ENCODE measurements at regions of chr11 and their contacts with region 1.

Region 1: GRCh38 chr11:75814686-75815344 is at the start of gene UVRAG:
- DNase-seq: peak; percentile 98 to 99
- ATAC-seq: peak; percentile 83 to 96 (median 86)
- H3K4me3 ChIP-seq: peak within 1 kb of the TSS; percentile 81
- H3K4me3 Mint-ChIP-seq: peak within 1 kb of the TSS; percentile 96
- H3K27ac ChIP-seq: peak within 1 kb of the TSS; percentile 86
- H3K27ac Mint-ChIP-seq: no peak within 1 kb of the TSS
- H3K4me1 ChIP-seq: peaks cover 19% of the 10 kb centered on the region
- H3K4me1 Mint-ChIP-seq: peaks cover 7 to 21% of the 10 kb centered on the region in 2 donors
- H3K27me3 ChIP-seq: no peaks in the 10 kb centered on the region
- H3K27me3 Mint-ChIP-seq: no peaks in the 10 kb centered on the region
- CTCF ChIP-seq: no peak
- total RNA-seq, gene UVRAG: 39.9 to 52.5 (median 41.4) TPM

Region 2: DNA sequence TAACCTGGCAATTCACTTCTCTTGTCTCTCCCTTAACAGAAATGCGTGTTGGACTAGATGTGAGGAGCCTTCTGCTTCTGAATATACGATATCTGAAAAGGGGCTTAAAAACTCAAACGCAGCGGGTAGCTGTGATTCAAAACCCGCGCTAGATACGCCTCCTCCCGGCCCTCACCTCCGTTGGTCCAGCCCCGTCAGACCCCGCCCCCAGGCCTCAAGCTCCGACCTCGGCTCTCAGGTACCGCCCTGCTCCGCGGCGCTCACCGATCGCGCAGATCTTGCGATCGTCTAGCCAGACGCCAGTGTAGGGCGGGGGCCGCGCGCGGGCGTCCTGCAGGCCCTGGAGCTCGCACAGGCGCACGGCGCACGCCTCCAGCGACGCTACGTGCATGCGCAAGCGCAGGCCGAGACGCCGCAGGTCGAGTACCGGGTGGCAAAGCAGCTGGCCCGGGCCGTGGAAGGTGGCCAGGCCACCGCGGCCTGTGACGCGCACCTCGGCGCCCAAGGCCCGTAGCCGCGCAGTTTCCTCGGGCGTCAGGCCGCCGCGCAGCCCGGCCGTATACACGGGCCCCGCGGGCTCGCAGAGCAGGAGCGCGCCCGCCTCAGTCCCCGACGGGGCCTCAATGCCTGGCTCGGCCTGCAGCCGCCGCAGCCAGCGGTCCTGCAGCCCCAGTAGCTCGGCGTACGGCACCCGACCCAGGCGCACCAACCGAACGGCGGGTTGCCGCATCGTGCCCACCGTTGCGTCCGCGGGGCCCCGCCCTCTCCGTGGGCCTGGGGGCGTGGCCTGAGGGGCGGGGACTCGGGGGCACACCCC is 1321.6 kb before region 1 on chr11 and contains the start of gene LIPT2:
- intact Hi-C with region 1: loop called (anchors 5 kb)
- DNase-seq: peak; percentile 94 to 99
- ATAC-seq: peak; percentile 95 to 99 (median 95)
- H3K4me3 ChIP-seq: peak within 1 kb of the TSS; percentile 44
- H3K4me3 Mint-ChIP-seq: peak within 1 kb of the TSS; percentile 83
- H3K27ac ChIP-seq: peak within 1 kb of the TSS; percentile 60
- H3K27ac Mint-ChIP-seq: peak within 1 kb of the TSS; percentile 76 to 84
- H3K4me1 ChIP-seq: peaks cover 14% of the 10 kb centered on the region
- H3K4me1 Mint-ChIP-seq: peaks cover 17% of the 10 kb centered on the region in 2 donors
- H3K27me3 ChIP-seq: no peaks in the 10 kb centered on the region
- H3K27me3 Mint-ChIP-seq: no peaks in the 10 kb centered on the region
- CTCF ChIP-seq: no peak
- total RNA-seq, gene LIPT2: 0.99 to 4.1 (median 3.1) TPM

Region 3: DNA sequence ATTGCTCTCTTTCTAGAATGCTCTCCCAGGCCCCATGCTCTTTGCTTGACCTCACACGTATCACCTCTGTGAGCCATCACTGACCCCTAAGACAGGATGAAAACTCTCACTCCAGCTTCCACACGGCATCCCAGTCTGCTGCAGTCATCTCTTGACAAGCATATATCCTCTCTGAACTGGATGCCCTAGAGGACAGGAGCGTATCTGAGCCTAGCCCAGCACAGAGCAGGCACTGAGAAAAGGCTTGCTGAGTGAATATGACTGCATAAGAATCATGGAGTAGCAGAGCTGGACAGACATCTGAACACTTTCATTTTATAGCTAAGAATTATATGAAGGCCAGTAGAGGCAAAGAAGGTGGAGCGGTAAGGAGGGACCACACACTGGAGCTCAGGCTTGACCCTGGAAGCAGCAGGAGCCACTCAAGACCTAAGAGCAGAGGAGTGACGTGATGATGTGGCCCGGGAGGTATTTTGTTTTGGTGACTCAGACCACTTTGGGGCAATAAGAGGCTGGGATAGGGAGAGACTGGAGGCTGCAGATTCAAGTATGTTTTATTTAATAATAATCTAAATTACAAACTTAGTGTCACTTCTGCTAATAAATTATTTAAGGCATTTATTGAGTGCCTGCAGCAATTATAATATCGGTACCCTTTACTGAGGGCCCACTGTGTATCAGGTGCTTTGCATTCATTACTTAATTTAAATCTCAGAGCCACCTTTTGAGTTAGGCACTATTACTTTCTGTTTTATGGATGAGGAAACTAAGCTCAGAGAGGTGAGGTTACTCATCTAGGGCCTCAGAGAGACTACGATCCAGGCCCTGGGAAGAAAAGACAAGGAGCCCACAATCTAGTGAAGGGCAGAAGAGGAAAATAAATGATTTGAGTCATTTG is 188.6 kb before region 1 on chr11:
- intact Hi-C with region 1: no loop called
- DNase-seq: no peak
- ATAC-seq: no peak
- H3K4me3 ChIP-seq: no peak overlapping the region
- H3K4me3 Mint-ChIP-seq: no peak overlapping the region
- H3K27ac ChIP-seq: no peak overlapping the region
- H3K27ac Mint-ChIP-seq: no peak overlapping the region
- H3K4me1 ChIP-seq: no peaks in the 10 kb centered on the region
- H3K4me1 Mint-ChIP-seq: no peaks in the 10 kb centered on the region
- H3K27me3 ChIP-seq: no peaks in the 10 kb centered on the region
- H3K27me3 Mint-ChIP-seq: peaks cover 9 to 11% of the 10 kb centered on the region in 2 donors
- CTCF ChIP-seq: no peak

Region 4: GRCh38 chr11:75867775-75868374 is 53.1 kb after region 1 on chr11:
- intact Hi-C with region 1: loop called (anchors 5 kb)
- DNase-seq: peak in 1 of 2 donors; percentile 82
- ATAC-seq: peak; percentile 58 to 75 (median 71)
- H3K4me3 ChIP-seq: no peak overlapping the region
- H3K4me3 Mint-ChIP-seq: no peak overlapping the region
- H3K27ac ChIP-seq: no peak overlapping the region
- H3K27ac Mint-ChIP-seq: no peak overlapping the region
- H3K4me1 ChIP-seq: no peaks in the 10 kb centered on the region
- H3K4me1 Mint-ChIP-seq: peaks cover 6 to 13% of the 10 kb centered on the region in 2 donors
- H3K27me3 ChIP-seq: no peaks in the 10 kb centered on the region
- H3K27me3 Mint-ChIP-seq: no peaks in the 10 kb centered on the region
- CTCF ChIP-seq: peak; percentile 88

Region 5: DNA sequence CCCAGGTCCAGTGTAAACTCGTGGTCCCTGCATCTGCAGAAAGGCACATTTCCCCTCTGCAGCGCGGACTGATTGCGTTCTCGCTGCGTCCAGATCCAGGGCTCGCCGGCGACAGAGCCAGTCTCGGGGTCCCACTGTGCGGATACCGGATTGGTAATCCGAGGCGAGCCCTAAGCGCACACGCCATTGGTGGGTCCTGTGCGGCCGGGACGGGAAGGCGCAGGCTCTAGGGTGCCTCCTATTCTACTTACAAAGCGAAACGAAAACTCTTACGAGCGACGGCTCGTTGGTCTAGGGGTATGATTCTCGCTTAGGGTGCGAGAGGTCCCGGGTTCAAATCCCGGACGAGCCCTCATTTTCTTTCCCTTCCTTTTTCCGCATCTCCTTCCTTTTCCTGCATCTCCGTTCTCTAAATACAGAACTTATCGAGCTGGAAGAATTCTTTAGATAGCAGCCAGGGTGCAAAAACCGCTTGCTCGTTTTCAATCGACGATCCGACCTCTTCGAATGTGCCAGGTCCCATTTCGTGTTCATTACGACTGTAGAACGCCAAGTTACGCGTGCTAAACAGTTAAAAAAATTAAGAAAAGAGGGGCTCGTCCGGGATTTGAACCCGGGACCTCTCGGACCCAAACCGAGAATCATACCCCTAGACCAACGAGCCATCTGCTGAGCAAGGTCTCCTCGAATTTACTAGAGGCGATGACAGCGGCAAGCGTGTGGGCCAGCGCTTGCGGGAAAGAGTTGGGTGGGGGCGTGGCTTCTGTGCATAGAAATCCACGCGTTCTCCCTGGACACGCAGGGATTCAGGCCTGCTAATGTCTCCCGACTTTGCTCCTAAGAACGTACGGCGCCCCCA is 420.6 kb after region 1 on chr11:
- intact Hi-C with region 1: loop called (anchors 10 kb)
- DNase-seq: peak; percentile 90 to 96
- ATAC-seq: peak; percentile 86 to 94 (median 90)
- H3K4me3 ChIP-seq: peak overlapping the region; percentile 96
- H3K4me3 Mint-ChIP-seq: peak overlapping the region; percentile 93
- H3K27ac ChIP-seq: peak overlapping the region; percentile 62
- H3K27ac Mint-ChIP-seq: peak overlapping the region; percentile 95 to 97
- H3K4me1 ChIP-seq: peaks cover 55% of the 10 kb centered on the region
- H3K4me1 Mint-ChIP-seq: peaks cover 28 to 46% of the 10 kb centered on the region in 2 donors
- H3K27me3 ChIP-seq: no peaks in the 10 kb centered on the region
- H3K27me3 Mint-ChIP-seq: peaks cover 0 to 10% of the 10 kb centered on the region in 2 donors
- CTCF ChIP-seq: no peak

Region 6: GRCh38 chr11:76566831-76567230 is 752.0 kb after region 1 on chr11:
- intact Hi-C with region 1: no loop called
- DNase-seq: no peak
- ATAC-seq: no peak
- H3K4me3 ChIP-seq: no peak overlapping the region
- H3K4me3 Mint-ChIP-seq: no peak overlapping the region
- H3K27ac ChIP-seq: no peak overlapping the region
- H3K27ac Mint-ChIP-seq: no peak overlapping the region
- H3K4me1 ChIP-seq: no peaks in the 10 kb centered on the region
- H3K4me1 Mint-ChIP-seq: no peaks in the 10 kb centered on the region
- H3K27me3 ChIP-seq: peaks cover 7% of the 10 kb centered on the region
- H3K27me3 Mint-ChIP-seq: peaks cover 16 to 21% of the 10 kb centered on the region in 2 donors
- CTCF ChIP-seq: no peak